ENCODE measurements at regions of chr11 and their contacts with region 1.

Region 1: DNA sequence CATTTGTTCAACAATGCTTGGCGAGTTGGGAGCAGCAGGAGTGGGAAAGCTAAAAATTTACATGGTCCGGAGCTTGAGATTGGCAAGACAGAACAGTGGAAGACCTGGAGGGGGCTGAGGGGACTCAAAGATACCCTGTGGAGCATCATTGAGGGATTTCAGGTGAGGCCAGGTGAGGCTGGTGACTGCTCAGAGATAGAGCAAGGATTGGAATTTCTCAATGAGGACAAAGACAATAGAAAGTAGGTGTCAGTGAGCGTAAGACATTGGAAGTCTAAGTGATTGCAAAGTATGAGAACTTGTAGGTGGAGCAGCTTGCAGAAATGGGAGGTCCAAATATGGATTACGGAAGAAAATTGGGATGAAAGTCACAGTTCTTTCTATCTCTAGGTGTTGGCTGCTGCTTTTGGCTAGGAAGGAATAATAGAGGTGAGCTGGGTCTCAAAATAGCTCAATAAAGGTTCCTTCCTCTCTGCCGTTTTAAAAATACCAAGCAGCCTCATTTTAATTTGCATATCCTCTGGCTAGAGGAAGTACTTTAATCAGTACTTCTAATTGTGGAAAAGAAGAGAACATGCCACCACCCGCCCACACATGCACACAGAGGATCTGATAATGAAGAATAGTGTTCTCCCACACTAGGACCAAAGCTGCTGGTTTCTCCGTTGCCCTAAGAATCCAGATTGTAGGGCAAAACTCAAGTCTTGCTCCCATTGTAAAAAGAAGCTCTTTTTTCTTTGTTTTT is 41.8 kb upstream of the SORL1-AS1 start:
- DNase-seq: peak; percentile 85
- ATAC-seq: peak; percentile 75
- H3K4me3 Mint-ChIP-seq: peak overlapping the region; percentile 45
- H3K27ac Mint-ChIP-seq: peak overlapping the region; percentile 92
- H3K4me1 Mint-ChIP-seq: peaks cover 62% of the 10 kb centered on the region
- H3K27me3 Mint-ChIP-seq: no peaks in the 10 kb centered on the region
- CTCF ChIP-seq: no peak

Region 2: GRCh38 chr11:121482231-121483129 is 12.0 kb before region 1 on chr11:
- CTCF ChIA-PET with region 1: interaction called, 17 read pairs
- POLR2A ChIA-PET with region 1: interaction called, 12 read pairs
- intact Hi-C with region 1: no loop called
- DNase-seq: peak; percentile 73
- ATAC-seq: peak; percentile 83
- H3K4me3 Mint-ChIP-seq: peak overlapping the region; percentile 75
- H3K27ac Mint-ChIP-seq: peak overlapping the region; percentile 94
- H3K4me1 Mint-ChIP-seq: peaks cover 58% of the 10 kb centered on the region
- H3K27me3 Mint-ChIP-seq: no peaks in the 10 kb centered on the region
- CTCF ChIP-seq: no peak

Region 3: GRCh38 chr11:121534131-121535093 is 39.9 kb after region 1 on chr11:
- CTCF ChIA-PET with region 1: no interaction called
- POLR2A ChIA-PET with region 1: no interaction called
- intact Hi-C with region 1: loop called (anchors 5 kb)
- DNase-seq: no peak
- ATAC-seq: no peak
- H3K4me3 Mint-ChIP-seq: no peak overlapping the region
- H3K27ac Mint-ChIP-seq: peak overlapping the region; percentile 17
- H3K4me1 Mint-ChIP-seq: peaks cover 58% of the 10 kb centered on the region
- H3K27me3 Mint-ChIP-seq: no peaks in the 10 kb centered on the region
- CTCF ChIP-seq: no peak

Region 4: DNA sequence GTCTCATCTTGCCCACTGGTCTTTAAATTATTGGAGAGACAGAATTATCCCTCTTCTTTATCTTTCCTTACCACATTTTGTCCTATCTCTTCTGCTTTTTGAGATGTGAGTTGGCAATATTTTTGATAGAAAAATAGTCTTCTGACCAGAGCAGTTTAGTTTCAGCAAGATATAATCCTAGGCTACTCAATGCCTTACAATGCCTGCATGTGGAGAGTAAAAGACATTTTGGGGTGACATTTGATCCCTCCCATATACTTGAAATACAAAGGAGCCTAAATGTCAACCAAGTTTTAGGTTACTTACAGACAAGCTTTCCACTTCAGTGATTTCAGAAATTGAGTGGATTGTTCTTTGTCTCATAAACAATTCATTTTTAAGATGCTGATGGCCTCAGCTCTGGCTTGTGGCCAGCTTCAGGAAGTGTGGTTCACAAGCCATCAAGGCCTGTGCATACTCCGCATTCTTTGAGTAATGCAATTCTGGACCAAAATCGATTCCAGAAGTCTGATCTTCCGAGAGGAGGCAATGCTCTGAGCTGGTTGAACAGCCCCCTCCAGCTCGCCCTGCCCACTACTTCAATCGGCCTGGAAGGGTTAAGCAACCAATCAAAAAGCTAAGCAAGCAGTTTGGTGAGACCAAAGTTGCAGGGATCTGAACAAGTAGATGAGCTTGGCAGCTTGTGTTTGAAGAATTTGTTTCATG is 347.1 kb after region 1 on chr11:
- CTCF ChIA-PET with region 1: no interaction called
- POLR2A ChIA-PET with region 1: no interaction called
- intact Hi-C with region 1: no loop called
- DNase-seq: no peak
- ATAC-seq: no peak
- H3K4me3 Mint-ChIP-seq: no peak overlapping the region
- H3K27ac Mint-ChIP-seq: no peak overlapping the region
- H3K4me1 Mint-ChIP-seq: no peaks in the 10 kb centered on the region
- H3K27me3 Mint-ChIP-seq: no peaks in the 10 kb centered on the region
- CTCF ChIP-seq: no peak

Region 5: GRCh38 chr11:121936781-121937447 is 442.4 kb after region 1 on chr11:
- CTCF ChIA-PET with region 1: no interaction called
- POLR2A ChIA-PET with region 1: no interaction called
- intact Hi-C with region 1: no loop called
- DNase-seq: no peak
- ATAC-seq: no peak
- H3K4me3 Mint-ChIP-seq: no peak overlapping the region
- H3K27ac Mint-ChIP-seq: no peak overlapping the region
- H3K4me1 Mint-ChIP-seq: no peaks in the 10 kb centered on the region
- H3K27me3 Mint-ChIP-seq: peaks cover 12% of the 10 kb centered on the region
- CTCF ChIP-seq: no peak

Measured in activated CD8-positive, alpha-beta T cell treated with anti-CD3 and anti-CD28 coated beads for 36 hours (primary cell).